ENCODE measurements at regions of chr1 and their contacts with region 1.

Region 1: DNA sequence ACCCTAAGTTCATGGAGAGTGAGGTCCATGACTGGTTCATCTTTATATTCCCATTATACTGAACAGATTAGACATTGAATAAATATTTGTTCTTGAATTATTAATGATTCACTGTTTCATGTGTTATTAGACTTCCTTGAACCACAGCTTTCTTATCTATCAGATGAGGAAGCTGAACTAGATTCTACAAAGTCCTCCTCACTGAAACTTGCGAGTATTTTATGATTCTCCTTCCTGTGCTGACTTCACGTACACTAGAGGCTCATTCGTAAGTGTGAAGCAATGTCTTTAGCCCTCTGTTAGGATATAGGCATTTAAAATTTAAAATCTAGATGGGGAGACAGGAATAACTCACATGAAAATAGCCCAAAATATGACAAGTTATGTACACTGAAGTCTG is 95.6 kb upstream of the IRF2BP2 start:
- DNase-seq: no peak
- H3K4me3 ChIP-seq: no peak overlapping the region
- H3K27ac ChIP-seq: no peak overlapping the region
- H3K4me1 ChIP-seq: no peaks in the 10 kb centered on the region
- CTCF ChIP-seq: no peak

Region 2: DNA sequence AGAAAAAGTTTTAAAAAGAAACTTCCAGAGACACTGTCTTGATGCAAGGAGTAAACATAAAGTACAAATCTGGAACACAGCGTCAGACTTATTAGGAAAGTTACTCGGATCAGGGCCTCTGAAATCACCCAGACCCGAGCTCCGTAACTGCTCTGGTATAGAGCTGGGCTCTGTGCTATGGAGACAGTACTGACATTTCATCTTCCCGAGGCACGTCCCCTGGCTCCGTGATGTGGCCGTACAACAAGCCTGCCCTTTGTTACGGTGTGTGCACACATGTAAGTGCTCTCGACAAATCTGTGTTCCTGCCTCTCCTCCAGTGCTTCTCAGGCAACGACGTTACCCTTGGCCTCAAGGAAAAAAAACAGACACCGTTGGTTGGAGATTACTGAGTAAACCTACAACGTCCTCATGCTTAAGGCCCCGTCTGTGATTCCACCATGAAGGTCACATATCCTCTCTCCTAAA is 11.3 kb after region 1 on chr1:
- CTCF ChIA-PET with region 1: no interaction called
- POLR2A ChIA-PET with region 1: interaction called, 12 read pairs
- intact Hi-C with region 1: no loop called
- DNase-seq: no peak
- H3K4me3 ChIP-seq: no peak overlapping the region
- H3K27ac ChIP-seq: no peak overlapping the region
- H3K4me1 ChIP-seq: no peaks in the 10 kb centered on the region
- CTCF ChIP-seq: no peak

Region 3: DNA sequence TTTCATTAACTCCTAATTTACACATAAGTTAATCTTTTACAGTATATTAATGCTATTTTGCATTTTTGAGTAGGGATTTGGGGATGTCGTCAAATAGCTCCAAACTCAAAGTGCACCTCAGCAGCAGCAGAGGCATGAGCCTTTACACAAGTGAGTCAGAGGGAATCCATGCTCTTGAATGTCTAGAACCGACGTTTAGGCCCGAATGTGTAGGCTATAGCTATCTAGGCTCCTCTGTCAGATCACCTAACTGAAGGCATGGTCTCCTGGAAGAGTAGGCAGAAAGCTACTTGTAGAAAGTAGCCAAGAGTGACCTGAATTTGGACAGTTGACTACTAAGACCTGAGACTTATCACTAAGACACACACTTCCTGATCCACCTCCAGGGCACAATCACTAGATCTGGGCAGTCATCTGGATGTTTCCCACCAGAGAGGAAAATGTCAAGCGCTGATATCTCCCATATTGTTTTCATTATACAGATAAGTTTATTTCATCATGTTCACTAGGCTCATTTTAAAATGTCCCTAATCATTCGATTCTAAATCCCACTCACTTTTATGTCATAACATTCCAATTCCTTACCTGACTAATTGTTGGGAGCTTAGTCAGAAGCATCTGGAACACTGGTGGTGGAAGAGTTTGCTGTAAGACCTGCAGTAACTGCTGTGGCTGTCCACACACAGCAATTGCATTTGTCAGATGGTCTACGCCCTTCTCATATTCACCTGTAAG is 407.7 kb after region 1 on chr1:
- CTCF ChIA-PET with region 1: no interaction called
- POLR2A ChIA-PET with region 1: no interaction called
- intact Hi-C with region 1: no loop called
- DNase-seq: no peak
- H3K4me3 ChIP-seq: no peak overlapping the region
- H3K27ac ChIP-seq: no peak overlapping the region
- H3K4me1 ChIP-seq: no peaks in the 10 kb centered on the region
- CTCF ChIP-seq: no peak